GM12878 (cell line): ENCODE measurements at regions of chr15 and their contacts with region 1.

Region 1: GRCh38 chr15:58980351-58980939 is 7.0 kb upstream of the RNF111 start:
- DNase-seq: no peak
- ATAC-seq: peak; percentile 39
- H3K4me3 ChIP-seq: peak overlapping the region; percentile 37
- H3K27ac ChIP-seq: peak overlapping the region; percentile 83; the same call in 1 of the 2 replicates
- H3K4me1 ChIP-seq: peaks cover 34% of the 10 kb centered on the region
- H3K27me3 ChIP-seq: no peaks in the 10 kb centered on the region
- CTCF ChIP-seq: peak; percentile 19 to 60 (median 43); a peak in 3 of 6 replicates
- EP300 ChIP-seq: no peak
- POLR2A ChIP-seq: no peak
- RAD21 ChIP-seq: peak; percentile 67

Region 2: GRCh38 chr15:59020322-59020721 is 39.9 kb after region 1 on chr15:
- CTCF ChIA-PET with region 1: no interaction called
- POLR2A ChIA-PET with region 1: no interaction called
- RAD21 ChIA-PET with region 1: no interaction called
- SMC1A ChIA-PET with region 1: no interaction called
- in situ Hi-C with region 1: no loop called
- intact Hi-C with region 1: no loop called
- DNase-seq: no peak
- ATAC-seq: peak; percentile 51
- H3K4me3 ChIP-seq: no peak overlapping the region
- H3K27ac ChIP-seq: no peak overlapping the region
- H3K4me1 ChIP-seq: peaks cover 5% of the 10 kb centered on the region
- H3K27me3 ChIP-seq: no peaks in the 10 kb centered on the region
- CTCF ChIP-seq: no peak
- EP300 ChIP-seq: no peak
- POLR2A ChIP-seq: no peak
- RAD21 ChIP-seq: no peak

Region 3: GRCh38 chr15:59063042-59063441 is 82.6 kb after region 1 on chr15:
- CTCF ChIA-PET with region 1: no interaction called
- POLR2A ChIA-PET with region 1: no interaction called
- RAD21 ChIA-PET with region 1: interaction called, 12 read pairs
- SMC1A ChIA-PET with region 1: interaction called, 5 read pairs
- in situ Hi-C with region 1: no loop called
- intact Hi-C with region 1: no loop called
- DNase-seq: no peak
- ATAC-seq: no peak
- H3K4me3 ChIP-seq: no peak overlapping the region
- H3K27ac ChIP-seq: no peak overlapping the region
- H3K4me1 ChIP-seq: peaks cover 6% of the 10 kb centered on the region; the same call in 1 of the 2 replicates
- H3K27me3 ChIP-seq: no peaks in the 10 kb centered on the region
- CTCF ChIP-seq: no peak
- EP300 ChIP-seq: no peak
- POLR2A ChIP-seq: no peak
- RAD21 ChIP-seq: no peak

Region 4: GRCh38 chr15:59138243-59138642 is 157.8 kb after region 1 on chr15:
- CTCF ChIA-PET with region 1: interaction called, 21 read pairs
- POLR2A ChIA-PET with region 1: no interaction called
- RAD21 ChIA-PET with region 1: interaction called, 12 read pairs
- SMC1A ChIA-PET with region 1: interaction called, 12 read pairs
- in situ Hi-C with region 1: no loop called
- intact Hi-C with region 1: loop called (anchors 1 kb)
- DNase-seq: no peak
- ATAC-seq: peak; percentile 96
- H3K4me3 ChIP-seq: no peak overlapping the region
- H3K27ac ChIP-seq: no peak overlapping the region
- H3K4me1 ChIP-seq: peaks cover 6% of the 10 kb centered on the region
- H3K27me3 ChIP-seq: no peaks in the 10 kb centered on the region
- CTCF ChIP-seq: peak; percentile 77 to 85 (median 83)
- EP300 ChIP-seq: no peak
- POLR2A ChIP-seq: 0 out of 2 replicates have a peak, but pooled peaks have one; percentile 0
- RAD21 ChIP-seq: peak; percentile 44; the same call in 1 of the 2 replicates

Region 5: DNA sequence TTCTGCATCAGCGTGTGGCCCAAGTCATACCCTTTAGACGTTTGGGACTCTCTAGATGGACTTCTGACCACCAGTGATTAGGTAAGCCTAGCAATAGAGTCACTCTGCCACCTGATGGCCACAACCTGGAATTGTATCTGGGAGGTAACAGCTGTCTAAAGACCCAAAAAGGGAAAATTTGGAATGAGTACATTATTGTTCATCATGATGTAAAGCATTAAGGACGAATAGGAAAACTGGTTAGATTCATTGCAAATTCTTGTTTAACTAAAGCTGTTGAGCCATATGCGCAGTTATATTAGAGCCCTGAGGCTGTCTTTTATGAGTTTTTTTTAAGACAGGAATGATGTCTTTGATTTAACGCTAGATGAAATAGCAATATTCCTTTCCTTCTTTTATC is 521.2 kb after region 1 on chr15:
- CTCF ChIA-PET with region 1: interaction called, 22 read pairs
- POLR2A ChIA-PET with region 1: interaction called, 5 read pairs
- RAD21 ChIA-PET with region 1: interaction called, 6 read pairs
- SMC1A ChIA-PET with region 1: interaction called, 13 read pairs
- in situ Hi-C with region 1: no loop called
- intact Hi-C with region 1: no loop called
- DNase-seq: no peak
- ATAC-seq: peak; percentile 89
- H3K4me3 ChIP-seq: no peak overlapping the region
- H3K27ac ChIP-seq: no peak overlapping the region
- H3K4me1 ChIP-seq: no peaks in the 10 kb centered on the region
- H3K27me3 ChIP-seq: no peaks in the 10 kb centered on the region
- CTCF ChIP-seq: peak; percentile 80 to 84 (median 81)
- EP300 ChIP-seq: no peak
- POLR2A ChIP-seq: no peak
- RAD21 ChIP-seq: peak; percentile 91